ENCODE measurements at regions of chr2 and their contacts with region 1.

Region 1: DNA sequence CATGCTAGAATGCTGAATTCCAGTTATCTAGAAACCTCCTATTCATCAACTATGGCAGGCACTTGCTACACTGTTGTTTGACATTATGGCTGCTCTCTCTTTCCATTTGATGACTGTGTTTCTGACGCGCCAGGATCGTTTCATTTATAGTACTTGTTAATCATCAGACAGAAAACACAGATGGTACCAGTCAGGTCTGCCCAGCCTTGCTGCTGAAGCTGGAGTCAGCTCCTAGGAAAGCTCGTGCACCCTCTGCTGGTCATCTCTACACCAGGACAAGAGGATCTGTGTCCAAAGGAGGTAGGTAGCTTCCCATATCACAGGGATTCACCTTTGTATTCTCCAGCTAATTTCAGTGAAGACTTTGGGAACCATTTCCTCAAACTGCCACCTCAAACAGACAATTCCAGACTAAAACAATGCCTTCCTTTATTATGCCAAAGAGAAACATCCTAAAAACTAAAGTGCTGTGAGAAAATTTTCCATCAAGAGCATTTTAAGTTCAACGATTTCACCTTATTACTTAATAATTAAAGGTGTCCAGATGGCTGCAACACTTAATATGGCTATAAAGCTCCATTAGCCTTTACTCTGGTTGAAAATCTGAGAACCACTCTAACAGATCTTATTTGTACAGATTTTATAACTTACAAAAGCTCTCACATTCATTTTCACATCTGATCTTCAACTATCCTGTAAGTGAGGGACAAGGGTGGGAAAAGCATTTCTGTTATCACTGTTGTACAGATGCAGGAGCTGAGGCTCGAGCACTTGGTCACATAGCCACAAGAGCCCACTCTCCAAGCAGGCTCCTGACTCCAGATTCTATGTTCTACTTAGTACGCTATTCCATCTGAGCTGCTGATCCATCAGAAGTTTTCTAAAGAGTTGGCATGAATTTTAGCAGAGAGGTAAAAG is 17.5 kb downstream of the METTL8 start:
- DNase-seq: peak; percentile 93
- H3K4me3 ChIP-seq: no peak overlapping the region
- H3K27ac ChIP-seq: no peak overlapping the region
- H3K4me1 ChIP-seq: peaks cover 14% of the 10 kb centered on the region
- H3K27me3 ChIP-seq: no peaks in the 10 kb centered on the region
- CTCF ChIP-seq: peak; percentile 90

Region 2: GRCh38 chr2:171160119-171160955 is 255.9 kb before region 1 on chr2 and contains the start of gene TLK1:
- CTCF ChIA-PET with region 1: no interaction called
- POLR2A ChIA-PET with region 1: no interaction called
- intact Hi-C with region 1: loop called (anchors 2 kb)
- DNase-seq: peak; percentile 84
- H3K4me3 ChIP-seq: peak within 1 kb of the TSS; percentile 74
- H3K27ac ChIP-seq: peak within 1 kb of the TSS; percentile 99
- H3K4me1 ChIP-seq: peaks cover 59% of the 10 kb centered on the region
- H3K27me3 ChIP-seq: no peaks in the 10 kb centered on the region
- CTCF ChIP-seq: no peak
- total RNA-seq, gene TLK1: 79.1 and 86.8 TPM in 2 replicates

Region 3: GRCh38 chr2:171319164-171319810 is 97.0 kb before region 1 on chr2:
- CTCF ChIA-PET with region 1: interaction called, 4 read pairs
- POLR2A ChIA-PET with region 1: no interaction called
- intact Hi-C with region 1: loop called (anchors 5 kb)
- DNase-seq: peak; percentile 77
- H3K4me3 ChIP-seq: no peak overlapping the region
- H3K27ac ChIP-seq: peak overlapping the region; percentile 53
- H3K4me1 ChIP-seq: peaks cover 22% of the 10 kb centered on the region
- H3K27me3 ChIP-seq: no peaks in the 10 kb centered on the region
- CTCF ChIP-seq: no peak